ENCODE measurements at regions of chr13 and their contacts with region 1.

Region 1: GRCh38 chr13:79393564-79394249 is 12.3 kb downstream of the RBM26 start:
- DNase-seq: no peak
- H3K4me3 ChIP-seq: no peak overlapping the region
- CTCF ChIP-seq: no peak

Region 2: DNA sequence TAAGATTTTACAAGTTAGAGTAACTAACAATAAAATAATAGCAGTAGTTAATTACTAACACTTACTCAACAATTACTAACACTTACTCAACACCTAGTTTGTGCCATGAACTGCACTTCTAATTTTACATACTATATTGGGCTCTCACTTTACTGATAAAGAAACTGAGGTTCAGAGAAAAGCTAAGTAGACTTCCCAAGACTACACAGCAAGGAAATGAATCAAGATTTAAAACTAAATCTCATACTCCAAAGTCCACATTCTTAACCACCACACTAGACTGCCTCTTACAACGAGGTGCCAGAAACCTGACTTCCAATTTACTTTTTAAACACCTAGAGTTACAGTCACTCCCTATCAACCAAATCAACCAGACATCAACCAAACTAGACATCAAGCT is 12.7 kb before region 1 on chr13:
- CTCF ChIA-PET with region 1: interaction called, 17 read pairs
- POLR2A ChIA-PET with region 1: no interaction called
- DNase-seq: no peak
- H3K4me3 ChIP-seq: no peak overlapping the region
- CTCF ChIP-seq: no peak

Region 3: DNA sequence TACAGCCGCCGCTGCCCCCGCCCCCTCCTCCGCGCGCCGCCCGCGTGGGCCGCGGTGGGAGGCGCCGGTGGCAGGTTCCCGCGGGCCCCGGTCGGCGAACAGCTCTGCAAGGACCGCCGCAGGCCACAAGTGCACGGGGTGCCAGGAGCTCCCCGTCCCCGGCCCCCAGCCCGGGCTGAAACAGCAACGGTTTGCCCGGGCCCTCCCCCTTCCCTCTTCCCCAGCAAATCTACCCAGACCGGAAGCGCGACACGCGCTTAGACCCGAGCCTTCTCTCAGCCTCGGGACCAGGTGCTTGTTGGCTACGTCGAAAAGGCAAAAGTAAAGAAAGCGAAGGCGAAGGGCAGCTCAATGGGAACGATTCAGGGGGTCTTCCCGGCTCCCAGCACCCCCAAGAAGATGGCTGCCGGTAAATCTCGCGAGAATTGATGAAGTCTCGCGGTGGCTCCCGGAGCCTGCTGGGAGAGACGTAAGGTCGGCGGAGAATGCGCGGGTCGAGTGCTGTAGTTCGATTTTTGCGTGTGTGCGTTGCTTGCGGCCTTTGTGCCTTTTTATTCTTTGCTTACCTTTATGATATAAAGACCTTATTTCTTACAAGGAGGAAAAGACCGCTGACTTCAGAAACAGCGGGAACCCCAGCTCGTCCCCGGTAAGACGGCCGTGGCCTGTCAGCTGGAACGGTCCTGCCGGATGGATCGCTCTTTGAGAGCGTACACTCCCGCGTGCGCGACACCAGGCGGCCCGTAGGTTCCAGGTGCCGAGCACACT is 12.3 kb after region 1 on chr13 and contains the start of gene RBM26:
- CTCF ChIA-PET with region 1: interaction called, 15 read pairs
- POLR2A ChIA-PET with region 1: no interaction called
- DNase-seq: peak; percentile 55
- H3K4me3 ChIP-seq: peak within 1 kb of the TSS; percentile 94
- CTCF ChIP-seq: peak; percentile 4

Region 4: GRCh38 chr13:79581870-79582315 is 188.2 kb after region 1 on chr13:
- CTCF ChIA-PET with region 1: no interaction called
- POLR2A ChIA-PET with region 1: no interaction called
- DNase-seq: no peak
- H3K4me3 ChIP-seq: no peak overlapping the region
- CTCF ChIP-seq: no peak